GM12878 (cell line): ENCODE measurements at regions of chr1 and their contacts with region 1.

Region 1: GRCh38 chr1:169044296-169044695 is 62.2 kb upstream of the ATP1B1 start:
- DNase-seq: peak; percentile 76
- ATAC-seq: peak; percentile 94
- H3K4me3 ChIP-seq: no peak overlapping the region
- H3K27ac ChIP-seq: peak overlapping the region; percentile 45
- H3K4me1 ChIP-seq: peaks cover 47% of the 10 kb centered on the region
- H3K27me3 ChIP-seq: no peaks in the 10 kb centered on the region
- CTCF ChIP-seq: no peak
- EP300 ChIP-seq: peak in 1 of 2 experiments; percentile 28; a peak in 1 of 4 replicates
- POLR2A ChIP-seq: no peak
- RAD21 ChIP-seq: no peak

Region 2: DNA sequence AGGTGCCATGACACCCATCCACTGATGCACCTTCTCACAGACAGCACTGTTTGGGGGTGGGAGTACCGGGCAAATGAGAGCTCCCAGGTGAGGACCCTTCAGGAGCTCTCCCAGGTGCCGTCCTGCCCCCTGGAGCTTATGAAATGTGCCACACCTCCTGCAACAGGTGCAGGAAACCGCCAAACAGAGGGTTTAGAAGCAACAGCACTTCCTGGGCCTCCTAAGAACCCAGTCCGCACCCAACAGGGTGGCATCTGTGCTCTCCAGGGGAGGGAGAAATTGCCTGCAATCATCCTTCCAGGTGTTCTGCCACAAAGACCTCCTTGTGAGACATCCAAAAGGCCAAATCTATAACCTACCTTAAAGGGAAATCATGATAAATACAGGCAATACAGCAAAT is 25.5 kb before region 1 on chr1:
- CTCF ChIA-PET with region 1: interaction called, 5 read pairs
- POLR2A ChIA-PET with region 1: interaction called, 29 read pairs
- RAD21 ChIA-PET with region 1: interaction called, 10 read pairs
- SMC1A ChIA-PET with region 1: interaction called, 26 read pairs
- in situ Hi-C with region 1: no loop called
- intact Hi-C with region 1: loop called (anchors 2 kb)
- DNase-seq: no peak
- ATAC-seq: no peak
- H3K4me3 ChIP-seq: no peak overlapping the region
- H3K27ac ChIP-seq: no peak overlapping the region
- H3K4me1 ChIP-seq: no peaks in the 10 kb centered on the region
- H3K27me3 ChIP-seq: no peaks in the 10 kb centered on the region
- CTCF ChIP-seq: no peak
- EP300 ChIP-seq: no peak
- POLR2A ChIP-seq: no peak
- RAD21 ChIP-seq: no peak

Region 3: GRCh38 chr1:169060906-169061639 is 16.8 kb after region 1 on chr1:
- CTCF ChIA-PET with region 1: interaction called, 6 read pairs
- POLR2A ChIA-PET with region 1: interaction called, 6 read pairs
- RAD21 ChIA-PET with region 1: interaction called, 7 read pairs
- SMC1A ChIA-PET with region 1: interaction called, 33 read pairs
- in situ Hi-C with region 1: no loop called
- intact Hi-C with region 1: no loop called
- DNase-seq: no peak
- ATAC-seq: no peak
- H3K4me3 ChIP-seq: no peak overlapping the region
- H3K27ac ChIP-seq: no peak overlapping the region
- H3K4me1 ChIP-seq: no peaks in the 10 kb centered on the region
- H3K27me3 ChIP-seq: no peaks in the 10 kb centered on the region
- CTCF ChIP-seq: no peak
- EP300 ChIP-seq: no peak
- POLR2A ChIP-seq: no peak
- RAD21 ChIP-seq: no peak

Region 4: DNA sequence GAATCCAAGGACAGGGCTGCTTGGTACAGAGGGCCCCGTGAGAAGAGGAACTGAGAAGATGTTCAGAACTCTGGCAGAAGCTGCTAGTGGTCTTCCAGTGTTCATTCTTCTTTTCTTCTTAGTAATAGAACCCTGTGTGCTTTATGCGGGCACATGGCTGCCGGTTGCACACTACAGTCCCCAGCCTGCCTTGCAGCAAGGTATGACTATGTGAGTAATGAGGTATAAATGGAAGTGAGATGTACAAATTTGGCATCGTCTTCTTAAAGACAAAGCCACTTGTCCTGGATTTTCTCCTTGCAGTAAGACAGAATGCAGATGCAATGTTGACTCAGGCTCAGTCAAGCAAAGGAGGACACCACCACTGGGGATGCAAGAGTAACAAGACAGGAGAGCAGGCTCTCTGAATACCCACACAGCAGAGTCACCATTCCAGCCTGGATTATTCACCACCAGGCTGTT is 47.2 kb after region 1 on chr1:
- CTCF ChIA-PET with region 1: interaction called, 13 read pairs
- POLR2A ChIA-PET with region 1: interaction called, 11 read pairs
- RAD21 ChIA-PET with region 1: interaction called, 109 read pairs
- SMC1A ChIA-PET with region 1: interaction called, 72 read pairs
- in situ Hi-C with region 1: no loop called
- intact Hi-C with region 1: no loop called
- DNase-seq: no peak
- ATAC-seq: peak; percentile 91
- H3K4me3 ChIP-seq: no peak overlapping the region
- H3K27ac ChIP-seq: peak overlapping the region; percentile 50
- H3K4me1 ChIP-seq: peaks cover 20% of the 10 kb centered on the region
- H3K27me3 ChIP-seq: no peaks in the 10 kb centered on the region
- CTCF ChIP-seq: no peak
- EP300 ChIP-seq: no peak
- POLR2A ChIP-seq: no peak
- RAD21 ChIP-seq: no peak